Activated CD8-positive, alpha-beta T cell treated with anti-CD3 and anti-CD28 coated beads, Interleukin-2, amount 10 ng/mL, durations not matched to agents 7 days and 5 days (primary cell): ENCODE measurements at regions of chr12 and their contacts with region 1.

Region 1: GRCh38 chr12:114508529-114509129 is 102.7 kb upstream of the TBX5 start:
- DNase-seq: peak; percentile 74
- ATAC-seq: peak; percentile 47
- H3K4me3 Mint-ChIP-seq: no peak overlapping the region
- H3K27ac Mint-ChIP-seq: no peak overlapping the region
- H3K4me1 Mint-ChIP-seq: no peaks in the 10 kb centered on the region
- H3K27me3 Mint-ChIP-seq: peaks cover 3% of the 10 kb centered on the region

Region 2: GRCh38 chr12:113965951-113966797 is 542.5 kb before region 1 on chr12 and contains the start of gene RBM19:
- CTCF ChIA-PET with region 1: interaction called, 12 read pairs
- POLR2A ChIA-PET with region 1: no interaction called
- DNase-seq: peak; percentile 98
- ATAC-seq: peak; percentile 98
- H3K4me3 Mint-ChIP-seq: peak within 1 kb of the TSS; percentile 99
- H3K27ac Mint-ChIP-seq: peak within 1 kb of the TSS; percentile 95
- H3K4me1 Mint-ChIP-seq: peaks cover 45% of the 10 kb centered on the region
- H3K27me3 Mint-ChIP-seq: no peaks in the 10 kb centered on the region
- total RNA-seq, gene RBM19: 29.6 to 33.8 TPM

Region 3: GRCh38 chr12:113980537-113981337 is 527.9 kb before region 1 on chr12:
- CTCF ChIA-PET with region 1: interaction called, 71 read pairs
- POLR2A ChIA-PET with region 1: no interaction called
- DNase-seq: peak; percentile 47
- ATAC-seq: peak; percentile 55
- H3K4me3 Mint-ChIP-seq: no peak overlapping the region
- H3K27ac Mint-ChIP-seq: no peak overlapping the region
- H3K4me1 Mint-ChIP-seq: no peaks in the 10 kb centered on the region
- H3K27me3 Mint-ChIP-seq: peaks cover 2% of the 10 kb centered on the region

Region 4: DNA sequence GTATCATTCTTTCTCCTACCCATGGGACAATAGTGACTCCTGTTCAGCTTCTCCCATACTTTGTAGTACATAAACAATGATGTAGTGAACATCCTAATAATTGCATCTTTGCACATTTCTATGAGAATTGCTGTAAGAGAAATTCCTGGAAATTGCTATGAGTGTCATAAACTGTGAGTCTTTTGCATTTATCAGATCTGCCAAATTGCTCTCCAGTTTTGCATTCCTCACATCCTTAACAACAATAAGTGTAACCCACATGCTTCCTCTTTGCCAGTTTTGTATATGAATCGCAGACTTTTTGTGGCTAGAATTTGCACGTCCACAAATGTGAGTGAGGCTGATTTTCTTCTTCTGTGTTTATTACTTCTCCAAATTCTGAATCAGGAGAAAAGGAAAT is 21.3 kb after region 1 on chr12:
- CTCF ChIA-PET with region 1: no interaction called
- POLR2A ChIA-PET with region 1: no interaction called
- DNase-seq: no peak
- ATAC-seq: no peak
- H3K4me3 Mint-ChIP-seq: no peak overlapping the region
- H3K27ac Mint-ChIP-seq: no peak overlapping the region
- H3K4me1 Mint-ChIP-seq: no peaks in the 10 kb centered on the region
- H3K27me3 Mint-ChIP-seq: peaks cover 2% of the 10 kb centered on the region

Region 5: GRCh38 chr12:114547636-114548035 is 39.0 kb after region 1 on chr12:
- CTCF ChIA-PET with region 1: no interaction called
- POLR2A ChIA-PET with region 1: no interaction called
- DNase-seq: no peak
- ATAC-seq: no peak
- H3K4me3 Mint-ChIP-seq: no peak overlapping the region
- H3K27ac Mint-ChIP-seq: no peak overlapping the region
- H3K4me1 Mint-ChIP-seq: no peaks in the 10 kb centered on the region
- H3K27me3 Mint-ChIP-seq: no peaks in the 10 kb centered on the region